ENCODE measurements at regions of chr7 and their contacts with region 1.

Region 1: GRCh38 chr7:22184549-22185199 is 172.3 kb downstream of the RAPGEF5 start:
- DNase-seq: no peak
- ATAC-seq: no peak

Region 2: GRCh38 chr7:22127835-22128527 is 56.7 kb before region 1 on chr7:
- intact Hi-C with region 1: no loop called
- DNase-seq: no peak
- ATAC-seq: no peak

Region 3: DNA sequence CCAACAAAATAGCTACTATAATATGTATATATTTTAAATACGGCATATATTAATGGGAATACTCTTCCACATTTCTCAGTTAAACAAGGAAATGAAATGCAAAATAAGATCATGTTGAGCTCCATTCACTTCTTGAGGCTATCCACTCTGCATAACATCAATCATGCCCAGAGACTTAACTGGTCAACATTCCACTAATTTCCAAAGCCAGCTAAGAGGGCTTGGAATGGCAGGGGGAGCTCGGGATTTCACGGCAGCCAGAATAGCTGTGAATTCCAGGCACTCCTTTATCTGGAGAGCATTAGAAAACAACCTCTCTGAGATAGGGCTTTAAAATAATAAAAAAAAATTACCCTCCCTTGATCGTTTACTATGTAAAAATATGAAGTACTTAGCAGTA is 44.1 kb before region 1 on chr7:
- intact Hi-C with region 1: loop called (anchors 5 kb)
- DNase-seq: no peak
- ATAC-seq: no peak

Region 4: GRCh38 chr7:22726345-22727185 is 541.9 kb after region 1 on chr7:
- intact Hi-C with region 1: no loop called
- DNase-seq: peak; percentile 44
- ATAC-seq: peak; percentile 54